Dorsolateral prefrontal cortex (tissue), 120 donors: ENCODE measurements at regions of chr22 and their contacts with region 1.

Region 1: DNA sequence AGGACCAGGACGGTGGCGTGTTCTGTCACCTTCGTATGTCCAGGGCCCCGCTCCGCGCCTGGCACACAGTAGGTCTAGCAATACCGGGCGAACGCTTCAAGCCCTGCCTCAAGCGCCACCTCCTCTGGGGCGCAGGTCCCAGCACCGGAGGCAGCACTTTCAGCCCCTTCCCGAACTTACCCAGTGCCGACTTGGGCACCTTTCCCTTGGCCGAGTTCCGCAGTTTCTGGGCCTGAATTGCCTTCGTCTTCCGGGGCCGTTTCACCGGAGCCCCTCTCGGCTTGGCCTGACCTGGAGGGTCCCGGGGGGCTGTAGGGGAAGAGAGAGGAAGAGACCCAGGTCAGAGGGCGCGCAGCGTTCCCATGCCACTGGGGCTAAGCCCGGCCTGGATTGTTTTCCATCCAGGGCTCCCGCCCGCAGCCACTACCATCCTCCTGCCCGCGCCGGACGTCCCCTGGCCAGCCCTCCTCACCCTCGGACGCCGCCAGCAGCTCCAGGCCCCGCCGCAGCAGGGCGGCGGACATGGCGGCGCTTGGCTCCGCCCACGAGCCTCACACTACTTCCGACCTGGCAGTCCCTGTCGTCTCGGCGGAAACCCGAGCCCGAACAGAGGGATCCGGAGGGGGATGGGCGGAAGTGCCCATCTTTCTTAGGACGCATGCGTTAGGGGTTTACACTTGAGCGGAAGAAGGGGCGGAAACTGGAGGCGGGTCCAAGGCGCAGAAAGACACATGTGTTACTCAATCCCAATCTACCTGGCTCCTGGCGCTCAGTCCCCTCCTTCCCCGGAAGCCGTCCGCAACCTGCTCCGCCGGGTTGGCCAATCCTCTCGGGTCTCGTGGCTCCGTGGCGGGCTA is at the start of gene RPS19BP1:
- DNase-seq: peak; percentile 96 to 99 (median 98)
- H3K4me3 ChIP-seq: peak within 1 kb of the TSS; percentile 58 to 100 (median 94)
- H3K27ac ChIP-seq: peak within 1 kb of the TSS; percentile 53 to 98 (median 93)
- H3K27me3 ChIP-seq: no peaks in the 10 kb centered on the region
- CTCF ChIP-seq: peak in 45 of 56 donors; percentile 4 to 56 (median 34)
- total RNA-seq, gene RPS19BP1: 44.3 to 109 (median 63.6) TPM

Region 2: DNA sequence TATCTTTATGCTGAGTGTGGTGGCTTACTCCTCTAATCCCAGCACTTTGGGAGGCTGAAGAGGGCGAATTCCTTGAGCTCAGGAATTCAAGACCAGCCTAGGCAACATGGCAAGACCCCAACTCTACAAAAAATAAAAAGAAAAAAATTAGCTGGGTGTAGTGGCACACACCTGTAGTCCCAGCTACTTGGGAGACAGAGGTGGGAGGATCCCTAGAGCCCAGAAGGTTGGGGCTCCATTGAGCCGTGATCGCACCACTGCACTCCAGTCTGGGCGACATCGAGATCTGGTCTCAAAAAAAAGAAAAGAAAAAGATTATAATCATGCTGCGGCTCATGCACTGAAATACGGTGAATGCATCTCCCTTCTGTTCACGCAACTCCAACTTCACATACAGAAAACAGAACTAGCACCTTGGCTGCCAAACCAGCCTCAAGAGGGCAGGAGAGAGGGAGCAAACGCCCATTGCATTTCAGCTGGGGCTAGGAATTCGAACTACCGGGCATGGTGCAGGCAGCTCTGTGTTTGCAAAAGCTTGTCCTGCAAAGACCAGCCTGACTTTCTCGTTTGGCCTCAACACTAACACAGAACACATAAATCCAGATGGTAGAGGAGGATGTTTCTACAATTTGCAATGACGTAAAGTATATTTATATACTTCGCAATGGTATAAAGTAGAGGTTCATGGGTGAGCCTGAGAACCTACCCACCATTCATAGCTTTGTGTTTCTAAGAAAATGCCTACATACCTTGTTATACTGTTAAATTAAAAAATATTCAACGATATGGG is 189.0 kb before region 1 on chr22:
- intact Hi-C with region 1: loop called (anchors 5 to 10 kb)
- DNase-seq: peak in 8 of 10 donors; percentile 65 to 84 (median 78)
- H3K4me3 ChIP-seq: peak overlapping the region in 26 of 59 donors; percentile 0 to 40 (median 16)
- H3K27ac ChIP-seq: peak overlapping the region in 34 of 59 donors; percentile 2 to 83 (median 52)
- H3K27me3 ChIP-seq: no peaks in the 10 kb centered on the region
- CTCF ChIP-seq: peak; percentile 45 to 80 (median 70)

Region 3: DNA sequence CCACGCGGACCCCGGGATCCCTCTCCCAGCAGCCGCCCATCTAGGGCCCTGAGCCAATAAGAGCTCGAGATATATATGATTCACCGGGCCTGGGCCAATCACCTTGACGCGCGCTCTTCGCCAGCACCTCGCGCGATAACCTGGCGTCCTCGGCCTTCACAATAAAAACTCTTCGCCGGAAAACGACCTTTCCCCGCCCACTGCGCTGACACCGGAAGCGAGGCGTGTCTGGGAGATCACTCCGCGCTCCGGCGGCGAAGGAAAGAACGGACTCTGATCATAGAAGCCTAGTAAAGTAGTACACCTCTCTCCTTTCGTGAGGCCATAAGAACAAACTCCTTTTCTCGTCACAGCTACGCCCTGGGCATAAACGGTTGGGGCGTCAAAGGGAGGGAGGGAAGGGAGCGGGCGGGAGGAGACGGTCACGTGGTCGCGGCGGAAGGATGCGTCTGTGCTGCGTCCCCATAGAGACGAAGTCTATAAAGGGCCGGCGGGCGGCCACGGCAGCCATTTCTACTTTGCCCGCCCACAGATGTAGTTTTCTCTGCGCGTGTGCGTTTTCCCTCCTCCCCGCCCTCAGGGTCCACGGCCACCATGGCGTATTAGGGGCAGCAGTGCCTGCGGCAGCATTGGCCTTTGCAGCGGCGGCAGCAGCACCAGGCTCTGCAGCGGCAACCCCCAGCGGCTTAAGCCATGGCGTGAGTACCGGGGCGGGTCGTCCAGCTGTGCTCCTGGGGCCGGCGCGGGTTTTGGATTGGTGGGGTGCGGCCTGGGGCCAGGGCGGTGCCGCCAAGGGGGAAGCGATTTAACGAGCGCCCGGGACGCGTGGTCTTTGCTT is 12.2 kb before region 1 on chr22 and contains the start of gene ATF4:
- intact Hi-C with region 1: loop called in 1 of 2 experiments (anchors 1 kb)
- DNase-seq: peak; percentile 87 to 96 (median 94)
- H3K4me3 ChIP-seq: peak within 1 kb of the TSS; percentile 68 to 100 (median 99)
- H3K27ac ChIP-seq: peak within 1 kb of the TSS; percentile 91 to 100 (median 99)
- H3K27me3 ChIP-seq: no peaks in the 10 kb centered on the region
- CTCF ChIP-seq: peak in 2 of 56 donors; percentile 34 to 44
- total RNA-seq, gene ATF4: 110 to 287 (median 161) TPM

Region 4: GRCh38 chr22:40177738-40178416 is 645.4 kb after region 1 on chr22 and contains the start of gene TNRC6B:
- intact Hi-C with region 1: loop called in 1 of 2 experiments (anchors 5 kb)
- DNase-seq: peak in 9 of 10 donors; percentile 61 to 91 (median 74)
- H3K4me3 ChIP-seq: peak within 1 kb of the TSS; percentile 41 to 97 (median 73)
- H3K27ac ChIP-seq: peak within 1 kb of the TSS; percentile 22 to 96 (median 87)
- H3K27me3 ChIP-seq: no peaks in the 10 kb centered on the region
- CTCF ChIP-seq: peak in 28 of 56 donors; percentile 8 to 58 (median 28)
- total RNA-seq, gene TNRC6B: 79.1 to 136 (median 104) TPM

Region 5: GRCh38 chr22:40636380-40637182 is 1104.1 kb after region 1 on chr22 and contains the start of gene MRTFA:
- intact Hi-C with region 1: loop called in 1 of 2 experiments (anchors 10 kb)
- DNase-seq: peak; percentile 100
- H3K4me3 ChIP-seq: peak within 1 kb of the TSS; percentile 65 to 99 (median 95)
- H3K27ac ChIP-seq: peak within 1 kb of the TSS; percentile 4 to 97 (median 90)
- H3K27me3 ChIP-seq: no peaks in the 10 kb centered on the region
- CTCF ChIP-seq: peak in 25 of 56 donors; percentile 4 to 44 (median 14)
- total RNA-seq, gene MRTFA: 43.3 to 100 (median 72.1) TPM